BJ (cell line): ENCODE measurements at regions of chr5 and their contacts with region 1.

Region 1: DNA sequence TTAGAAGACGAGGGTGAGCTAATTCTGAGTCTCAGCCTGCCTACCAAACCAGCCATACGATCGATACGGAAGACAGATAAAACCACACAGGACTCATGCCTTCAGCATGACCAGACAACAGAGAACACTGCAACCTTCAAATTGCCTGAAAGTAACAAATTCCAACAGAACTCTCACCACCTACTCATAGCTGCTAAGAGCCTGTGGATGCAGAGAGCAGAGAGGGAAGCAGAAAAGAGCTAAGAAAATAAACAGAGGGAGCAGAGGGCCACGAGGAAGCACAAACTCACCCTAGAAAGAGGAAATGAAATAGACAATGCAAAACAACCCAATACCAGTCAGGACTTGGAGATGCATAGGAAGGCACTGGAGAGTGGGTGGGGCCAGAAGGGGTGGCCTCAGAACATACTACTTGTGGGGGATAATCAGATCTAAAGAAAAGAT is 86.7 kb upstream of the TAS2R1 start:
- DNase-seq: no peak
- H3K4me3 ChIP-seq: no peak overlapping the region
- H3K27me3 ChIP-seq: no peaks in the 10 kb centered on the region
- CTCF ChIP-seq: no peak

Region 2: GRCh38 chr5:8478326-8478725 is 1238.5 kb before region 1 on chr5:
- CTCF ChIA-PET with region 1: no interaction called
- POLR2A ChIA-PET with region 1: interaction called, 11 read pairs
- DNase-seq: no peak
- H3K4me3 ChIP-seq: no peak overlapping the region
- H3K27me3 ChIP-seq: no peaks in the 10 kb centered on the region
- CTCF ChIP-seq: no peak

Region 3: DNA sequence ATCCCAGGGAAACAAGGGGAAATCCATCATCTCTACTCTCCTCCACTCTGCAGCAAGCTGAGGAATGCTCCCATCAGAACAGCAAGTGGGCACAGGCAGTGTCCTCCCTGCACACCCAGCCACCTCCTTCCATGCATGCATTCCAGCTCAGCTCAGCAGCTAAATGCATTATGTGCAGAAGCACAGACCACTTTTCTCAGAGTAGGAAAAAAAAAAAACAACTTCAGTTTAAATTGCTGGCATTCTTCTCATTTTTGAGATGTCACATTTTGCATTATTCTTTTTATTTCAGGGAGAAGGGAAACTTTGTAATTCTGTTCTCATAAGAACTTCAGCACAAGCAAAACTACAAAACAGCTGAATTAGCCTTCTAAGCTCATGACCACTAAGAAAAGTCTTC is 483.1 kb before region 1 on chr5:
- CTCF ChIA-PET with region 1: no interaction called
- POLR2A ChIA-PET with region 1: interaction called, 12 read pairs
- DNase-seq: peak; percentile 31
- H3K4me3 ChIP-seq: no peak overlapping the region
- H3K27me3 ChIP-seq: no peaks in the 10 kb centered on the region
- CTCF ChIP-seq: no peak